Activated B cell treated with CpG ODN at 0.5 μM for 24 hours (primary cell): ENCODE measurements at regions of chrX and their contacts with region 1.

Region 1: DNA sequence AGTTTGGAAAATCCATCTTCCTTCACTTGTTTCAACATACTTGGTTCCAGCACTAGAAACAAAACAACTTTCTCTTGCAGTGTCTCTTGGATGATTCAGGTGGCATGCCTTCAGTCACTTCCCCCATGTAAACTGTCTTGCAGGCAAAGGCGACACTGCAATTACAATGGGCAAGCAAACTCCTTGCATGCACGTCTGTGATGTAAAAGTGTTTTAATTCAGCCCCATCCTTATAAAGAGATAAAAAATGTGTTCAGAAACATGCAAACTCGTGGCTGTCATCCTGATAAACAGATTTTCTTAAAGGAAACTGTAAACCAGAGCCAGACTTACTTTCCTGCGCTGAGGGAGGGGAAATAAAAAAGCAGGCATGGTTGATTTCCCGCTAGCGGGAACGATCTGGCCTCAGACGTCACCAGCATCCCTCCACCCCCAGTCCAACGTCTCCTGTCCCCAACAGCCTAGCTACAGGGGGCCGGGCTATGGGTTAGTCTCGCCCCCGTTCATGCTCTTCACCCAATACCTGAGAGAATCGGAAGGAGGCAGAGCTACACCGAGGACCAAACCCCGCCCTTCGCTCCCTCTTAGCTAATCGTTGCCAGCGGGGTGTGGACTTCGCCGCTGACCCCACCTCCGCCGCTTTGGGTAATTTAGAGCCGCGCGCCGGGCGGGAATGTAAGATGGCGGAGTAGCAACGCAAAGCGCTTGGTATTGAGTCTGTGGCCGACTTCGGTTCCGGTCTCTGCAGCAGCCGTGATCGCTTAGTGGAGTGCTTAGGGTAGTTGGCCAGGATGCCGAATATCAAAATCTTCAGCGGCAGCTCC is at the start of gene PRPS1:
- DNase-seq: peak; percentile 68
- ATAC-seq: peak; percentile 99
- H3K4me3 Mint-ChIP-seq: peak within 1 kb of the TSS; percentile 93
- H3K27ac Mint-ChIP-seq: peak within 1 kb of the TSS; percentile 93
- H3K4me1 Mint-ChIP-seq: peaks cover 31% of the 10 kb centered on the region
- H3K27me3 Mint-ChIP-seq: no peaks in the 10 kb centered on the region
- CTCF ChIP-seq: no peak
- total RNA-seq, gene PRPS1: 49.7 and 53.8 TPM in 2 replicates

Region 2: DNA sequence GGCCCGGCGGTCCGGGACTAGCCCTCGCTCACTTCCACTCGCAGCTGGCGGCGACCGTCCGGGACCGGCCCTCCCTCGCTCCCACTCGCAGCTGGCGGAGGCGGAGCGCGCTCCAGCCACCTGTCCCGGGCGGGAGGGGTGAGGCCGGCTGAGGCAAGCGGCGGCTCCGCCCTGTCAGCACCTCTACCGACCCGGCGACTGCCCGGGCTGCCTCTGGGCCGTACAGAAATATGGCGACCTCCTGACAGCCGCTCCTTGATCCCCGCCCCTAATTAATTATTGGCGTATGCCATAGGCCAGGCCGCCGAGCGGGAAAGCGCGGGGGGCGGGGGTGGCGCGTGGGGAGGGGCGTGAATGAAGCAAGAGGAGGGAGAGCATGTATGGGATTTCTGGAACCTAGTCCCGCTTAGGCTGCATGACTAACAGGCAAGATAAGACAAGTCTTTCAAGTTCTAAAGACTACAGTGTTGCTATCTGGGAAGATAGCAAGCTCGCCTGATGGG is 628.0 kb before region 1 on chrX and contains the start of gene MORC4:
- CTCF ChIA-PET with region 1: no interaction called
- POLR2A ChIA-PET with region 1: no interaction called
- intact Hi-C with region 1: loop called (anchors 1 kb)
- DNase-seq: peak; percentile 42
- ATAC-seq: peak; percentile 88
- H3K4me3 Mint-ChIP-seq: peak within 1 kb of the TSS; percentile 89
- H3K27ac Mint-ChIP-seq: no peak within 1 kb of the TSS
- H3K4me1 Mint-ChIP-seq: peaks cover 10% of the 10 kb centered on the region
- H3K27me3 Mint-ChIP-seq: no peaks in the 10 kb centered on the region
- CTCF ChIP-seq: no peak
- total RNA-seq, gene MORC4: 3.7 and 4.1 TPM in 2 replicates

Region 3: GRCh38 chrX:107205770-107206696 is 422.0 kb before region 1 on chrX and contains the starts of genes DNAAF6 and NUP62CL:
- CTCF ChIA-PET with region 1: no interaction called
- POLR2A ChIA-PET with region 1: no interaction called
- intact Hi-C with region 1: loop called (anchors 2 kb)
- DNase-seq: peak; percentile 41
- ATAC-seq: peak; percentile 92
- H3K4me3 Mint-ChIP-seq: peak within 1 kb of the TSS; percentile 90
- H3K27ac Mint-ChIP-seq: peak within 1 kb of the TSS; percentile 53
- H3K4me1 Mint-ChIP-seq: peaks cover 8% of the 10 kb centered on the region
- H3K27me3 Mint-ChIP-seq: no peaks in the 10 kb centered on the region
- CTCF ChIP-seq: no peak
- total RNA-seq, gene DNAAF6: not detected in 2 replicates
- total RNA-seq, gene NUP62CL: 1.1 and 1.4 TPM in 2 replicates

Region 4: DNA sequence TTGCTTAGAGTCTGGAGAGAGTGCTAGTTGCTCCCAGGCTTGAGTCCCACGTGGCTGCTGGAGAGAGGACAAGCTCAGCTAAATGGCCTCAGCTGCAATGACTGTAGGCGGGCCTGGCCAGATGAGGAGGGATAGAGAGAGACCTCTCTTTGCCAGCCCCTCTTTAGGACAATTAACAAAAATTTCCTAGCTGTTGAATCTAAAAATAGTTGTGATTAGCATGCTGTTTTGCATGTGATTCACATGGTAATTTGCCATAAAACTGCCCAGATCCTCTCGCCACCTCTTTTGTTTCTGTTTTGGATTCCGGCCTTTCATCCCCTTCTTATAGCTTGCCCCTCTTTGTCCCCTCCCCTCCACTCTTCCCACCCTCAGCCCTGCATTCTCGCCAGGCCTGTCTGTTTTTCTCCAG is 28.6 kb before region 1 on chrX:
- CTCF ChIA-PET with region 1: no interaction called
- POLR2A ChIA-PET with region 1: no interaction called
- intact Hi-C with region 1: no loop called
- DNase-seq: no peak
- ATAC-seq: no peak
- H3K4me3 Mint-ChIP-seq: no peak overlapping the region
- H3K27ac Mint-ChIP-seq: no peak overlapping the region
- H3K4me1 Mint-ChIP-seq: no peaks in the 10 kb centered on the region
- H3K27me3 Mint-ChIP-seq: no peaks in the 10 kb centered on the region
- CTCF ChIP-seq: no peak

Region 5: DNA sequence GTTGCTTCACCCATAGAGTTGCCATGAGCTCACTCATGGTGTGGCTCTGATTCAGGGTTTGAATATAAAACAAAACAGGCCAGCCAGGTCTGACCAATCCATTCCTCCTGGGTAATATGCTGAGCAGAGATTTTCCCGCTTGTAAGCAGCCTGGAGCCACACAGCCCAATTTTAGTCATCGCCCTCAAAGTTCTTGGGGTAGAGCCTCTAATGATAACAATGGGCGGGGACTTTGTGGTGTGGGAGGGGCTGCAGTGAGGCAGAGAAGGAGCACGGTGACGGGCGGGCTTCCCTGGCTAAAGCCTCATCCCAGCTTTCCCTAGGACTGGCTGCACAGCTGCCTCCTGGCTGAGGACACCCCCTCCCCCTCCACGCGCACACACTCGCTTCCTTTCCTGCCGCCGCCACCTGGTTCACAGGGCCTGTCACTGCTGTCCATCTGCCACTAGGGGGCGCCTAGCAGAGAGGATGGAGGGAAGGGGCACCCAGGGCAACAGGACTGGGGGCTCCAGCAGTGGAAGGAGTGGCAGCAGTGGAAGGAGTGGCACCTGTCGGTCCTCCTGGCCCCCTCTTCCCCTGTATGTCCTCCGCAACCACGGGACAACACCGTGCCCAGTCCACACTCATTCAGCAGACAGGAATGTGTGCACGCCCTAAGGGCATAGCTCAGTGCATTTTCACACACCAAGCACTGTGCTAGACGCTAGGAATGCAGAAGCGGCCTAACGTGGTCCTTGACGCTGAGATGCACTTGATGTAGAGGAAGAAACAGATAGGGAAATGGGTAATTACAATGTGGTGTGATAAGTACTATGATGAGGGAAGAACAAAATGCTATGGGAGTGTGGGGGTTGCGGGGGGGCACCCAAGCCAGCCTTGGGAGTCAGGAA is 27.1 kb after region 1 on chrX:
- CTCF ChIA-PET with region 1: interaction called, 7 read pairs
- POLR2A ChIA-PET with region 1: no interaction called
- intact Hi-C with region 1: loop called (anchors 2 kb)
- DNase-seq: peak; percentile 40
- ATAC-seq: peak; percentile 86
- H3K4me3 Mint-ChIP-seq: no peak overlapping the region
- H3K27ac Mint-ChIP-seq: no peak overlapping the region
- H3K4me1 Mint-ChIP-seq: peaks cover 10% of the 10 kb centered on the region
- H3K27me3 Mint-ChIP-seq: no peaks in the 10 kb centered on the region
- CTCF ChIP-seq: no peak

Region 6: DNA sequence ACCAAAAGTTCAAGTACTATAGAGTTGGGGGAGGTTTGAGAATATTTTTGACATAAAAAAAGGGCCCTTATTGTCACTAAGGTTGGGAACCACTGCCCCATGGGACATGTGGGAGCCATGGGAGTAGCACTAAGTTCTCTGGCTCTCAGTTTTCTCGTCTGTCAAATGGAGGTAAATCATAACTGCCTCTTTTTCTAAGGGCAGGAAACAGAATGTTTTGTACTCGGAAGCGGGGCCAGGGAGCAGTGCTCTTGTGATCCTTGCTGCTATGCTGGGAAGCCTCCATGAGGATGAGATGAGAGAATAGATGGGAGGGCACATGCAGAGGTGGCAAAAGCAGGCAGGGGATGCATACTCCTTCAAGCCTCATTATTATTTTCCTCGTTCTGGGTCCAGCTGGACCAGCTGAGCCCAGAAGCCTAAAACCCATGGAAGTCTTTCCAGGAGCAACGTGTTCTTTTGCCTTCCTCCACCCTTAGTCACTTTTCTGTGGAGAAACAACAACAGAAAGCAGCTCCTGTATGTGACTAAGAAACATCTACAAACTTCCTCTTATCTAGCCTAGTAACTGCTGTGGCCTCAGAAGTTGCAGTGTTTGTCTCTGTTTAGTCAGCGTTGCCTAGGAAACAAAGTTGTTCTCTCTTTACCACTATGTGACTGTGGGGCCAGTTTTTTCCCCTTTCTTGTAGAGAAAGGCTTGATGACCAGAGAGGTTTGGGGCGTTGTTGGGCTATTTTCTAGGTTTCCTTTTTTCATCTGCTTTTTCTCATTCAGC is 82.8 kb after region 1 on chrX:
- CTCF ChIA-PET with region 1: no interaction called
- POLR2A ChIA-PET with region 1: interaction called, 17 read pairs
- intact Hi-C with region 1: no loop called
- DNase-seq: peak; percentile 18
- ATAC-seq: peak; percentile 62
- H3K4me3 Mint-ChIP-seq: peak overlapping the region; percentile 78
- H3K27ac Mint-ChIP-seq: peak overlapping the region; percentile 99
- H3K4me1 Mint-ChIP-seq: peaks cover 52% of the 10 kb centered on the region
- H3K27me3 Mint-ChIP-seq: no peaks in the 10 kb centered on the region
- CTCF ChIP-seq: no peak

Region 7: GRCh38 chrX:108091266-108091877 is 463.3 kb after region 1 on chrX and contains the starts of genes ATG4A and PSMD10:
- CTCF ChIA-PET with region 1: no interaction called
- POLR2A ChIA-PET with region 1: interaction called, 5 read pairs
- intact Hi-C with region 1: loop called (anchors 1 kb)
- DNase-seq: peak; percentile 69
- ATAC-seq: peak; percentile 95
- H3K4me3 Mint-ChIP-seq: no peak within 1 kb of the TSS
- H3K27ac Mint-ChIP-seq: no peak within 1 kb of the TSS
- H3K4me1 Mint-ChIP-seq: peaks cover 6% of the 10 kb centered on the region
- H3K27me3 Mint-ChIP-seq: no peaks in the 10 kb centered on the region
- CTCF ChIP-seq: no peak
- total RNA-seq, gene ATG4A: 8.1 and 9.9 TPM in 2 replicates
- total RNA-seq, gene PSMD10: 33.4 and 35.4 TPM in 2 replicates